ENCODE measurements at regions of chr10 and their contacts with region 1.

Region 1: DNA sequence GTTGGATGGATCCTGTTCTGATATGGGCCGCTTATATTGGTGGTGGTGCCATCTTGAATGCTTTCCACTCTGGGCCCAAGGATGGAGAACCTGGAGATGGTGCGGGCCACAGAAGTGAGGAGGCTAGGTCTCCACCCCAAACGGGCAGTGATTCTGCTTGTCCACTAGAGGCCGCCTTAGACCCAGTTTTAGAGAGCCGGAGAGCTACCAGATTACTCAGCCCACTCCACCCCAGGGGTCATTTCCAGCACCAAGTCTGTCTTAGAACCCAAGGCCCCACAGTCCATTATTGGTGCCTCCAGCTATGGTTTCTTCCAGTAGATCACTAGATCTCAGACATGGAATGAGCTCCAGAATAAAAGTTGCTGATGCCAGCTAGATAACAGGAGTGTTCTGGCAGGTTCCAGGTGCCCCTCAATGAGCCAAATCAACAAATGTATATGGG is 11.8 kb upstream of the CAMK2G start:
- DNase-seq: peak; percentile 89 to 92 (median 90)
- ATAC-seq: peak; percentile 98
- H3K4me3 ChIP-seq: no peak overlapping the region
- H3K27ac ChIP-seq: no peak overlapping the region
- H3K4me1 ChIP-seq: peaks cover 17 to 20% of the 10 kb centered on the region in 2 experiments
- H3K27me3 ChIP-seq: no peaks in the 10 kb centered on the region
- CTCF ChIP-seq: peak; percentile 93 to 98 (median 97)
- EP300 ChIP-seq: peak; percentile 21; the same call in 1 of the 2 replicates
- POLR2A ChIP-seq: no peak
- RAD21 ChIP-seq: peak; percentile 99

Region 2: DNA sequence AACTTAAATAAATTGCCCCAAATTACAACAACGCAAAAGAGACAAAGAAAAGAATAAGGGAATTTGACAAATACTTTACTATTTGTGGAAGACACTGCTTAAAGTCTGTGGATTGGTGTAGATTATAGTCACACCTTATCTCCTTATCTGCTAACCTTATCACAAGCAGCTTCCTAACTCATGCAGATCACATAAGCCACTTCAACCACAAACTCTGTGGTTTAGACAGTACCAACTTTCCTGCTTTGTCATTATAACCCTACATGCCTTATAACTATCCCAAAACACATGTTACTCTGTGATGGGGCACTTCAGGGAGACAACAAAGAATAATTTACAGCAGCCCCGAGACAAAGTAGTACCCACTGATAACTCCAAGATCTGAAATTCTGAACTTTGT is 348.8 kb before region 1 on chr10:
- CTCF ChIA-PET with region 1: no interaction called
- POLR2A ChIA-PET with region 1: no interaction called
- in situ Hi-C with region 1: no loop called
- intact Hi-C with region 1: no loop called
- DNase-seq: peak in 1 of 4 experiments; percentile 10
- ATAC-seq: peak; percentile 47; the same call in 1 of the 3 replicates
- H3K4me3 ChIP-seq: no peak overlapping the region
- H3K27ac ChIP-seq: no peak overlapping the region
- H3K4me1 ChIP-seq: peaks cover 0 to 7% of the 10 kb centered on the region in 2 experiments; a peak in 2 of 5 replicates
- H3K27me3 ChIP-seq: no peaks in the 10 kb centered on the region
- CTCF ChIP-seq: no peak
- EP300 ChIP-seq: no peak
- POLR2A ChIP-seq: no peak
- RAD21 ChIP-seq: no peak

Region 3: GRCh38 chr10:73827346-73828089 is 58.6 kb before region 1 on chr10:
- CTCF ChIA-PET with region 1: no interaction called
- POLR2A ChIA-PET with region 1: no interaction called
- in situ Hi-C with region 1: no loop called
- intact Hi-C with region 1: no loop called
- DNase-seq: no peak
- ATAC-seq: no peak
- H3K4me3 ChIP-seq: no peak overlapping the region
- H3K27ac ChIP-seq: no peak overlapping the region
- H3K4me1 ChIP-seq: peaks cover 2 to 16% of the 10 kb centered on the region in 2 experiments; a peak in 3 of 5 replicates
- H3K27me3 ChIP-seq: no peaks in the 10 kb centered on the region
- CTCF ChIP-seq: no peak
- EP300 ChIP-seq: no peak
- POLR2A ChIP-seq: no peak
- RAD21 ChIP-seq: no peak

Region 4: GRCh38 chr10:73899423-73899822 is 13.3 kb after region 1 on chr10:
- CTCF ChIA-PET with region 1: no interaction called
- POLR2A ChIA-PET with region 1: interaction called, 12 read pairs
- in situ Hi-C with region 1: no loop called
- intact Hi-C with region 1: no loop called
- DNase-seq: no peak
- ATAC-seq: peak; percentile 29; the same call in 1 of the 3 replicates
- H3K4me3 ChIP-seq: no peak overlapping the region
- H3K27ac ChIP-seq: no peak overlapping the region
- H3K4me1 ChIP-seq: peaks cover 4 to 6% of the 10 kb centered on the region in 2 experiments; a peak in 4 of 5 replicates
- H3K27me3 ChIP-seq: no peaks in the 10 kb centered on the region
- CTCF ChIP-seq: no peak
- EP300 ChIP-seq: no peak
- POLR2A ChIP-seq: no peak
- RAD21 ChIP-seq: no peak

Region 5: DNA sequence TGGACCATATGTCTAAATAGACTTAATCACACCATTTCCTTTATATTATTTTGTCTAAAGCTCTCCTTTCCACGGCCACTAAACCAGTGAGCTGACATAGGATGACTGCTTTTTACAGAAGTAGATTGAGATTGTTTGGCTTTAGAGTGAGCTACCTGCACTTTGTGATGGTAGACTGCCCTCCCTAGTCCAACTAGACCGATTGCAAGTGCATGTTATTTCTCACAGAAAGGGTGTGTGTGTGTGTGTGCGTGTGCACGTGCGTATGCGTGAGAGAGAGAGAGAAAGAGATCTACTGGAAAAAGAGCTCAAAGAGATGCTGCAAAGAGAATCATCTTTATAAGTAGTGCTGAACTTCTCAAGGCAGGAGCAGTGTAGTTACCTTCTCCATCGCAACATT is 172.6 kb after region 1 on chr10:
- CTCF ChIA-PET with region 1: interaction called, 8 read pairs
- POLR2A ChIA-PET with region 1: no interaction called
- in situ Hi-C with region 1: no loop called
- intact Hi-C with region 1: loop called (anchors 1 kb)
- DNase-seq: peak in 2 of 4 experiments; percentile 34 to 61
- ATAC-seq: peak; percentile 71
- H3K4me3 ChIP-seq: no peak overlapping the region
- H3K27ac ChIP-seq: no peak overlapping the region
- H3K4me1 ChIP-seq: peaks cover 11 to 30% of the 10 kb centered on the region in 2 experiments; a peak in 4 of 5 replicates
- H3K27me3 ChIP-seq: no peaks in the 10 kb centered on the region
- CTCF ChIP-seq: peak; percentile 40 to 52 (median 44); a peak in 4 of 6 replicates
- EP300 ChIP-seq: no peak
- POLR2A ChIP-seq: no peak
- RAD21 ChIP-seq: peak; percentile 56 to 73

Region 6: GRCh38 chr10:74103560-74104248 is 217.6 kb after region 1 on chr10:
- CTCF ChIA-PET with region 1: interaction called, 13 read pairs
- POLR2A ChIA-PET with region 1: no interaction called
- in situ Hi-C with region 1: no loop called
- intact Hi-C with region 1: loop called (anchors 2 kb)
- DNase-seq: peak in 2 of 4 experiments; percentile 31 to 45
- ATAC-seq: peak; percentile 76
- H3K4me3 ChIP-seq: no peak overlapping the region
- H3K27ac ChIP-seq: no peak overlapping the region
- H3K4me1 ChIP-seq: no peaks in the 10 kb centered on the region
- H3K27me3 ChIP-seq: no peaks in the 10 kb centered on the region
- CTCF ChIP-seq: peak; percentile 41 to 60 (median 48); a peak in 5 of 6 replicates
- EP300 ChIP-seq: no peak
- POLR2A ChIP-seq: no peak
- RAD21 ChIP-seq: peak; percentile 31 to 68; a peak in 3 of 4 replicates

Measured in K562 (cell line).